Psoas muscle (tissue), 8 donors: ENCODE measurements at regions of chr19 and their contacts with region 1.

Region 1: GRCh38 chr19:16185123-16185767 is at the start of gene FAM32A:
- DNase-seq: peak; percentile 99
- ATAC-seq: peak; percentile 98 to 99 (median 98)
- H3K4me3 ChIP-seq: peak within 1 kb of the TSS; percentile 83
- H3K27ac ChIP-seq: peak within 1 kb of the TSS; percentile 87
- H3K4me1 ChIP-seq: peaks cover 10% of the 10 kb centered on the region
- H3K27me3 ChIP-seq: peaks cover 0 to 9% (median 0%) of the 10 kb centered on the region in 3 donors
- CTCF ChIP-seq: peak; percentile 35
- total RNA-seq, gene FAM32A: 26.3 to 44.2 (median 30.8) TPM

Region 2: GRCh38 chr19:15584541-15585115 is 600.6 kb before region 1 on chr19:
- intact Hi-C with region 1: loop called (anchors 2 to 5 kb)
- DNase-seq: peak; percentile 78 to 84
- ATAC-seq: peak in 3 of 4 donors; percentile 36 to 71 (median 58)
- H3K4me3 ChIP-seq: no peak overlapping the region
- H3K27ac ChIP-seq: no peak overlapping the region
- H3K4me1 ChIP-seq: no peaks in the 10 kb centered on the region
- H3K27me3 ChIP-seq: peaks cover 0 to 42% (median 5%) of the 10 kb centered on the region in 3 donors
- CTCF ChIP-seq: peak; percentile 70

Region 3: DNA sequence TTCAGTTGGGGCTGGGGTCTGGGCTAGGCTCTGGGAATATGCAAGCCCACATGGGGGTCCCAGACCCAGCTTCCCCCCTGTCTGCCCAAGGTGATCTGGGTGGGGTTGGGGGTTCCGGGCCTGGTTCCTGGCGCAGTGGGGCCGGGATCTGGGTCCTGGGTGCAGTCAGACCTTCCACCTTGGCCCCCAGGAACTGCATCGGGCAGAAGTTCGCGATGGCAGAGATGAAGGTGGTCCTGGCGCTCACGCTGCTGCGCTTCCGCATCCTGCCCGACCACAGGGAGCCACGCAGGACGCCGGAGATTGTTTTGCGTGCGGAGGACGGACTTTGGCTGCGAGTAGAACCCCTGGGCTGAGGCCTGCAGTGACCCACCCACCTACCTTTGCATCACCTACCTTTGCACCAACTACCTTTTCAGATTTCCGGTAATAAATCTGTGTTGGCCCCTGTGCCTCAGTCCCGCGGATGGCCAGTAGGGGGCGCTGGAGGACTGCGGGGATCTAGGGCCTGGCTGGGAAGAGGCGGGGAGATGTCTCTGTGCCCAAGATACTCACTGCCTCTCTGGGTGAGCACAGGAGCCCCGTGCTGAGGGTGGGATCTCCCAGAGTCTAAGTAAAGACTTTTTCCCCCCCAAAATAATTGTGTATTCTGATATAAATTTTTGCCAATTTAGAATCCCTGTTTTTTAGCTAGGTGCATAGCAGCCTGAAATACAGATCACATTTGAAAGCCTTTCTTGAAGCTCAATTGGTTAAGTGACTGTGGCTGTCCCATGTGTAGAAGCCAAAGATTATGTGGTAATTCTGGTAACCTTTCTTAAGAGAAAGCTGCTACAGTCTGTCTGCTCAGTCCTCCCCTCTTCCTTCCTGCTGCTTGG is 556.0 kb before region 1 on chr19:
- intact Hi-C with region 1: loop called in 1 of 2 experiments (anchors 5 kb)
- DNase-seq: peak; percentile 74 to 85
- ATAC-seq: peak in 2 of 4 donors; percentile 51 to 53
- H3K4me3 ChIP-seq: no peak overlapping the region
- H3K27ac ChIP-seq: no peak overlapping the region
- H3K4me1 ChIP-seq: no peaks in the 10 kb centered on the region
- H3K27me3 ChIP-seq: peaks cover 0 to 5% (median 2%) of the 10 kb centered on the region in 3 donors
- CTCF ChIP-seq: peak; percentile 68

Region 4: DNA sequence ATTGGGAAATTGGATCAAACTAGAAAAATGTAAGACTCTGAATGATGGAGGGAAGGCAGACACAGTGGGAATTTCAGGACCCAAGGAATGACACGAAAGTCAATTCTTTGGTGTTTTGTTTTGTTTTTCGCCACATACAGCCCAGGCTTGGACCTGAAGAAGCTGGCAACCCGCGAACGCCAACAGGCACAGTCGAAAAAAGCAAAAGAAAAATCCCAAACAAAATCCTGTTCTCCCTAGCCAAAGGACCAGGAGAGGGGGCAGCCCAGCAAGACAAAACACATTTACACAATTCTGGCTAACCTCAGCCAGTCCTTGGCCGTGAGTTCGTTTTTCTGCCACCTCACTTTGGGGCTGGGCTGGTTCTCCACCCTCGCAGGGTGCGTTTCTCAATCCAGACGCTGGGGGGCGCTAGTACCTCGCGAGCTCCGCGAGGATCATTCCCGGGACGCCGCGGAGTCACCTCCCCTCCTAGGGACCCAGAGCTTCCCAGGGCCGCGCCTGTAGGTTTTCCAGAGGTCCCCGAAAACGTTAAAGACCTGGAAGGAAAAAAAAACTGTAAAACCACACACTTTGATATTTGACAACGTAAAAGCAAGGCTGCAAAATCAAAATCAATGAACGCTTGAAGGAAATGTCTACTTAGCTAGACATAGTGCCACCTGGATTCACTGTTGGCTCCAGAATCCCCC is 143.8 kb before region 1 on chr19:
- intact Hi-C with region 1: loop called (anchors 1 to 5 kb)
- DNase-seq: peak; percentile 81 to 85
- ATAC-seq: peak; percentile 74 to 84 (median 82)
- H3K4me3 ChIP-seq: no peak overlapping the region
- H3K27ac ChIP-seq: no peak overlapping the region
- H3K4me1 ChIP-seq: no peaks in the 10 kb centered on the region
- H3K27me3 ChIP-seq: no peaks in the 10 kb centered on the region
- CTCF ChIP-seq: peak; percentile 91

Region 5: DNA sequence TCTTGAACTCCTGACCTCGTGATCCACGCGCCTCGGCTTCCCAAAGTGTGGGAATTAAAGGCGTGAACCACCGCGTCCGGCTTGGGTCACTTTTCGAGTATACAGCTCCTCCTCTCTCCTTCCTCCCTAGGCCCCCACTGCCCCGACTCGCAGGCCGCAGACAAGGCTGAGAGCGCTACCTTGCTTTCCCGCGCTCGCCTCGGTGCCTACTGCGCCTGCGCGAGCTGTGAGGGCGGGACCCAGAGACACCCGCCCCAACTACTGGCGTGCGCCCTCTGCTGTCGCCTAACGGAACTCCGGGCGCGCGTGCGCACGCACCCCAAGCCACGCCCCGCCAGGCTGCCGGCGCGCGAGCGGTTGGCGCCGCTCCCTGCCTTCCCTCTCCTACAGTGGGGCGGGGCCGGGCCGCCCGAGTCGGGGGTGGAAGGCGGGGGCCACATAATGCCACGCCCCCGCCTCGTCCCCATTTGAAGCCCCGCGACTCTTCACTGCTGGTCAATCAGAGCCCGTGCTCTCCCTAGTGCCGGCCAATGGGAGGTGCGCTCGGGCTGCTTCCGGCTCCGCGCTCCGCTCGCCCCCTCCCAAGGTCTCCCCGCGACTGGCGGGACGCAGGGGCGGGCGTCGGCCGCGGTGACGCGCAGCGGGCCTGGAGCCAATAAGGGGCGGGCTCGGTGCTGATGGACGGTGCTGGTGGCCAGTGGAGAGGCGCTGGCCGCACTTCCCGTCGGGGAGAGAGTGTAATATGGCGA is 73.9 kb before region 1 on chr19 and contains the start of gene RAB8A:
- intact Hi-C with region 1: loop called in 1 of 2 experiments (anchors 5 kb)
- DNase-seq: peak; percentile 99 to 100
- ATAC-seq: peak; percentile 97 to 98 (median 97)
- H3K4me3 ChIP-seq: peak within 1 kb of the TSS; percentile 66
- H3K27ac ChIP-seq: peak within 1 kb of the TSS; percentile 83
- H3K4me1 ChIP-seq: peaks cover 10% of the 10 kb centered on the region
- H3K27me3 ChIP-seq: no peaks in the 10 kb centered on the region
- CTCF ChIP-seq: peak; percentile 96
- total RNA-seq, gene RAB8A: 8.0 to 12.4 (median 8.9) TPM